Gastrocnemius medialis (tissue), 4 donors: ENCODE measurements at regions of chr5 and their contacts with region 1.

Region 1: DNA sequence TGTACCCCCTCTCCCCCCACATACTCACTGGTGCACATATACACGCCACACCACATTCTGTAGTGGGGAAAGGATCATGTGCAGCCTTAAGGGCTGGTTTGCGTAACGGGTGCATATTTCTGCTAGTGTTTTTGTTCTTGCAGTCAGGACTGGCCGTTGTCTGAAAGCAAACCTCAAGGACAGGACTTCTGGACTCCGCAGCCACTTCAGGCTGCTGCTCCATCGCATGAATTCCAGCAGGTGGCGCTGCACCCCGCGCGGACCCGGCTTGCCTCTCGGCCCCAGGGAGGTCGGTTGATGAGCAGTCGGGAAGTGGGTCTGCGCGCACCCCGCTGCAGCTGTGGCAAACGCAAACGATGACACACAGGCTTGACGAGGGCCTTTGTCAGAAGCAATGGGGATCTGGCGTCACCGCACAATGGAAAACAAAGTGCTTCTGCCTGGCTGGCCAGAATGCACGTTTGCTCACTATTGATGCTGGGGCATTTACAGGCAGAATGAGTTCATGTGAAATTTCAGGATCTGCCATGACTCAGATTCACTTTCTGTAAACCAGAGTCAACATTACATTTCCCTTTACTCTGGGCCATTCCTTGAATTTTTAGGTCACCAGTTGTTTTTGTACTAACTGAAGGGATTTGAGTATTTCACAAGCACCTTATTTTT is 36.3 kb upstream of the GLRX start:
- DNase-seq: peak; percentile 88 to 92
- ATAC-seq: peak; percentile 35 to 37
- H3K4me3 ChIP-seq: peak overlapping the region; percentile 5 to 36 (median 12)
- H3K27ac ChIP-seq: peak overlapping the region; percentile 86 to 94 (median 89)
- H3K4me1 ChIP-seq: peaks cover 70 to 76% of the 10 kb centered on the region in 2 donors
- H3K27me3 ChIP-seq: no peaks in the 10 kb centered on the region
- CTCF ChIP-seq: peak; percentile 98 to 100 (median 99)
- POLR2A ChIP-seq: peak; percentile 29 to 58

Region 2: DNA sequence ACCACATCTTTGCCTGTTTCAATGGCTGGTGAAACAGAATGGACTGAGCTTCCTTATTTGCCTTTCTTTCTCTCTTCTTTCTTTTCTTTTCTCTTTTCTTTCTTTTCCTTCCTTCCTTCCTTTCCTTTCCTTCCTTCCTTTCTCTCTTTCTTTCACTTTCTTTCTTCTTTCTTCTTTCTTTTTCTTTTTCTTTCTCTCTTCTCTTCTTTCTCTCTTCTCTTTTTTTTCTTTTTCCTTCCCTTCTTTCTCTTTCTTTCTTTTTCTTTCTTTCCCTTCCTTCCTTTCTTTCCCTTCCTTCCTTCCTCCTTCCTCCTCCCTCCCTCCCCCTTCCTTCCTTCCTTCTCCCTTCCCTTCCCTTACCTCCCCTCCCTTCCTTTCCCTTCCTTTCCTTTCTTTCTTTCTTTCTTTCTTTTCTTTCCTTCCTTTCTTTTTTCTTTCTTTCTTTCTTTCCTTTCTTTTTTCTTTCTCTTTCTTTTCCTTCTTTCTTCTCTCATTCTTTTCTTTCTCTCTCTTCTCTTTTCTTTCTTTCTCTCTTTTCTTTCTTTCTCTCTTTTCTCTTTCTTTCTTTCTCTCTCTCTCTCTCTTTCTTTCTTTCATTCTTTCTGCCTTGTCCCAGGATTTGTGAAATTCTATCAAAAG is 523.8 kb before region 1 on chr5:
- in situ Hi-C with region 1: no loop called
- intact Hi-C with region 1: no loop called
- DNase-seq: no peak
- ATAC-seq: no peak
- H3K4me3 ChIP-seq: no peak overlapping the region
- H3K27ac ChIP-seq: no peak overlapping the region
- H3K4me1 ChIP-seq: no peaks in the 10 kb centered on the region
- H3K27me3 ChIP-seq: no peaks in the 10 kb centered on the region
- CTCF ChIP-seq: no peak
- POLR2A ChIP-seq: no peak

Region 3: GRCh38 chr5:95730730-95731570 is 127.8 kb before region 1 on chr5 and contains the start of gene RHOBTB3:
- in situ Hi-C with region 1: no loop called
- intact Hi-C with region 1: loop called (anchors 5 kb)
- DNase-seq: peak; percentile 89 to 91
- ATAC-seq: peak; percentile 69 to 72
- H3K4me3 ChIP-seq: peak within 1 kb of the TSS; percentile 80 to 87 (median 85)
- H3K27ac ChIP-seq: peak within 1 kb of the TSS; percentile 91 to 96 (median 94)
- H3K4me1 ChIP-seq: peaks cover 39 to 48% of the 10 kb centered on the region in 2 donors
- H3K27me3 ChIP-seq: no peaks in the 10 kb centered on the region
- CTCF ChIP-seq: peak in 1 of 5 experiments; percentile 16
- POLR2A ChIP-seq: peak; percentile 88 to 92
- total RNA-seq, gene RHOBTB3: 40.1 to 134 (median 86.9) TPM

Region 4: DNA sequence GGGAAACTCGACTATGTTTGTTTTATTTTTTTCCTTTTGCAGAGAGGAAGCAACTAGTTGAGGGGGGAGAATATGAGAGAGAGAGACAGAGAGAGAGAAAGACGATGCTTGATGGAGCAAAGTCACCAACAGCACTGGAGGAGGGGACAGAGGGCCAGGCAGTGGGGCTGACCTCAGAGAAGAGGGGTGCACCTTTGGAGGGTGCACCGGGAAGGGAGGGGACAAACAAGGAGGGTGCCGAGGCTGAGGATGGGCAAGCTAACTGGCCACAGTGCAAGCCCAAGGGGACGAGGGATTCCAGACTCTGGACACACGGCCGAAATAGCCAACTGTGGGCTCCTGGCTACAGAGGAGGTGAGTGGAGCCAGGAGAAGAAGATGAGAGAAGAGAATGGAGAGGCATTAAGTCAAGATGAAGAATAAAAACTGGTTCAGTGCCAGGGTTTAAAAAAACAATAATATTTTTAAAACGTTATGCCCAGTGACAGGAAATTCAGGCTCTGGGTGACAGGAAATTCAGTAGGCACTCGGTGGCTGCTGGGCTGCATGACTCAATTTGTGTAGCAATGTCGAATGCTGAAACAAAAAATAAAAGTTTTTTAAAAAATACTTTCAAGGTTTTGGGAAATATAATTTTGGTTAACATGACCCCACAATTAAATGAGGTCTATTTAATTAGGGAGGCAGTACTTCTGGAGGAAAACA is 23.0 kb before region 1 on chr5:
- in situ Hi-C with region 1: no loop called
- intact Hi-C with region 1: loop called (anchors 2 kb)
- DNase-seq: peak in 1 of 2 donors; percentile 55
- ATAC-seq: no peak
- H3K4me3 ChIP-seq: peak overlapping the region; percentile 59 to 78 (median 66)
- H3K27ac ChIP-seq: peak overlapping the region; percentile 90 to 95 (median 92)
- H3K4me1 ChIP-seq: peaks cover 21 to 56% of the 10 kb centered on the region in 2 donors
- H3K27me3 ChIP-seq: no peaks in the 10 kb centered on the region
- CTCF ChIP-seq: no peak
- POLR2A ChIP-seq: no peak

Region 5: GRCh38 chr5:95883613-95884325 is 25.0 kb after region 1 on chr5:
- in situ Hi-C with region 1: no loop called
- intact Hi-C with region 1: loop called (anchors 2 kb)
- DNase-seq: peak in 1 of 2 donors; percentile 60
- ATAC-seq: peak; percentile 72 to 78
- H3K4me3 ChIP-seq: no peak overlapping the region
- H3K27ac ChIP-seq: peak overlapping the region; percentile 44 to 73 (median 68)
- H3K4me1 ChIP-seq: peaks cover 13 to 14% of the 10 kb centered on the region in 2 donors
- H3K27me3 ChIP-seq: no peaks in the 10 kb centered on the region
- CTCF ChIP-seq: no peak
- POLR2A ChIP-seq: peak in 1 of 2 donors; percentile 12

Region 6: DNA sequence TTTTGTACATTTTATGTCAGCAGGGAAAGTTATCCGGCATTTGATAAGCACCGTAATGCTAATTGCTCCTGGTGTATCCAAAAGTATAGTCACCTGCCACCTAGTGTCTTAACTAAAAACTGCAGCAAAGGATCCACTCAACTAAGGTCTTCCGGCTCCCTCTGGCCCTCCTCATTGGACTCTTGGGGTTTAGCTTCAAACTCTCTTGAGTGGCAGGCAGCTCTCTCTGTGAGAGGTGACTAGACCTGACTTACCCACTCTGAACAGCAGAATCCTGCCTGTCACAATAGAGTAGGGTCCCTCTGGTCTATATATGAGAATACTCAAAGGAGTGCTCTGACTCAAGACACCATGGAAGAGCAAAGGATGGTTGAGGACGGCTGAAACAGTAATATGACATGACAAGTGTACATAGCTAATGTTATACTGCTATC is 743.0 kb after region 1 on chr5:
- in situ Hi-C with region 1: loop called in 2 of 4 experiments (anchors 25 kb)
- intact Hi-C with region 1: loop called (anchors 2 kb)
- DNase-seq: peak in 1 of 2 donors; percentile 22
- ATAC-seq: peak; percentile 87 to 90
- H3K4me3 ChIP-seq: no peak overlapping the region
- H3K27ac ChIP-seq: no peak overlapping the region
- H3K4me1 ChIP-seq: no peaks in the 10 kb centered on the region
- H3K27me3 ChIP-seq: no peaks in the 10 kb centered on the region
- CTCF ChIP-seq: peak; percentile 63 to 86 (median 75)
- POLR2A ChIP-seq: no peak

Region 7: GRCh38 chr5:96662725-96663513 is 804.1 kb after region 1 on chr5:
- in situ Hi-C with region 1: no loop called
- intact Hi-C with region 1: loop called (anchors 5 kb)
- DNase-seq: peak; percentile 88 to 94
- ATAC-seq: peak; percentile 80 to 84
- H3K4me3 ChIP-seq: peak overlapping the region; percentile 72 to 98 (median 88)
- H3K27ac ChIP-seq: peak overlapping the region; percentile 94 to 98 (median 96)
- H3K4me1 ChIP-seq: peaks cover 25 to 28% of the 10 kb centered on the region in 2 donors
- H3K27me3 ChIP-seq: no peaks in the 10 kb centered on the region
- CTCF ChIP-seq: peak in 2 of 5 experiments; percentile 4 to 19
- POLR2A ChIP-seq: peak; percentile 89

Region 8: DNA sequence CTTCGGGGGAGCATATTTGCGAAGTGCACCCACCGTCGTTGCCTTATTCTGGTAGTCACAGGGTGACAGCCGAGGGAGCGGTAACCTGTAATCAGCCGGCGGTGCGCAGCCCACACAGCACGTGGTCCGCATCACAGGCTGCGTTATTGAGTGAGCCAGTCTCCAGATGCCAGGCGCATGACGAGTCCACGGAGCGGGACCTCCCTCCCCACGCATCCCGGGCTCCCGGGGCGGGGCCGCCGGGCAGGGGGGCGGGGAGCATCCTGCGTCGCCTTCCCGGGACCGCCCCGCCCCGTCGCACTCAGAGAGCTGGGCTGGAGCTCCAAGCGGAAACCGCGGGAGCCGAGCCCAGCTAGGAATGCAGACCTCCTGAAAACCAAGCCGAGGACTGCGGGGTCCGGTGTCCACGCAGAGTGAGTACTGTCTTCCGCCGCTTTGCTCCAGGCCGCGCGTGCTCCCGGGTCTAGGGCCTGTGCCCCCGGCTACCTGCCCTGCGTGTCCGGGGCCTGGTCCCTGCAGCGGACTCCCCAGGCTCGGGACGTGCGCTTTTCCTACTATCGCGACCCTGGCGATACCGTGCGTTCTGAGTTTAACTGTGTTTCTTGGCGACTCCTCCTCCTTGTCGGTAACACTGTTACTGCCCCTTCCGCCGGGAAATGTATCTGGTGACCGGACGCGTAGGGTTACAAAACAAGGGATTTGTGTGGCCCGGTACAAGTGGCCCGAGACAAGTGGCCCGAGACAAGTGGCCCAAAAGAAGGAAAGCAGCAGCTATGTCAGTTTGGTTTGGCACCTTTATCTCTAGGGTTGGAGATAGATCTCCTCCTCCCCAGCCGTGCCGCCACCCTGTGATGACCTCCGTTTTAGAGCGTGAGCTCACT is 843.9 kb after region 1 on chr5:
- in situ Hi-C with region 1: loop called in 1 of 4 experiments (anchors 25 kb)
- intact Hi-C with region 1: no loop called
- DNase-seq: peak; percentile 97 to 98
- ATAC-seq: peak; percentile 49 to 68
- H3K4me3 ChIP-seq: peak overlapping the region; percentile 63 to 87 (median 79)
- H3K27ac ChIP-seq: peak overlapping the region; percentile 94 to 99 (median 98)
- H3K4me1 ChIP-seq: peaks cover 38 to 75% of the 10 kb centered on the region in 2 donors
- H3K27me3 ChIP-seq: no peaks in the 10 kb centered on the region
- CTCF ChIP-seq: no peak
- POLR2A ChIP-seq: peak; percentile 90 to 93